Activated CD8-positive, alpha-beta T cell treated with anti-CD3 and anti-CD28 coated beads, Interleukin-2, amount 10 ng/mL, durations not matched to agents 7 days and 5 days (primary cell): ENCODE measurements at regions of chr9 and their contacts with region 1.

Region 1: DNA sequence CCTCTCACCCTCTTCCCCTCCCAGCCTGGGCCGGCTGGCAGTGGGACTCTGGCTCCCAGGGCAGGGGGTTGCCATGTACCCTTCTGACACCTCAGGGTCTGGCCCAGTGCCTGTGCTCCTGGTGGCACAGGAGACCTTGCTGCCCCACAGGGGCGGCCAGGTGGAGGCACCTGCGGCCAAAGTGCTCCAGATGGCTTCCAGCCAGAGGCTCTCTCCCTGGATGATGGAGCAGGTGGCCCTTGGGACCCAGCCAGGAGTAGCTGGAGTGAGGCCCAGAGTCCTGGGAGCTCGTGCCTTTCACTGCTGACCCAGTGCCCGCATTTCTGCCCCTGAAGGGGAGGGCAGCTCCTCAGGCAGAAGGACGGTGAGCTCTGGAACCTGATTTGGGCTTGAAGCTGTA is 87.3 kb downstream of the NTNG2 start:
- DNase-seq: no peak
- ATAC-seq: no peak
- H3K4me3 Mint-ChIP-seq: no peak overlapping the region
- H3K27ac Mint-ChIP-seq: no peak overlapping the region
- H3K4me1 Mint-ChIP-seq: peaks cover 2% of the 10 kb centered on the region
- H3K27me3 Mint-ChIP-seq: peaks cover 14% of the 10 kb centered on the region

Region 2: GRCh38 chr9:131762356-131762932 is 486.7 kb before region 1 on chr9:
- CTCF ChIA-PET with region 1: interaction called, 32 read pairs
- POLR2A ChIA-PET with region 1: interaction called, 3 read pairs
- DNase-seq: peak; percentile 75
- ATAC-seq: peak; percentile 92
- H3K4me3 Mint-ChIP-seq: no peak overlapping the region
- H3K27ac Mint-ChIP-seq: no peak overlapping the region
- H3K4me1 Mint-ChIP-seq: no peaks in the 10 kb centered on the region
- H3K27me3 Mint-ChIP-seq: peaks cover 22% of the 10 kb centered on the region

Region 3: DNA sequence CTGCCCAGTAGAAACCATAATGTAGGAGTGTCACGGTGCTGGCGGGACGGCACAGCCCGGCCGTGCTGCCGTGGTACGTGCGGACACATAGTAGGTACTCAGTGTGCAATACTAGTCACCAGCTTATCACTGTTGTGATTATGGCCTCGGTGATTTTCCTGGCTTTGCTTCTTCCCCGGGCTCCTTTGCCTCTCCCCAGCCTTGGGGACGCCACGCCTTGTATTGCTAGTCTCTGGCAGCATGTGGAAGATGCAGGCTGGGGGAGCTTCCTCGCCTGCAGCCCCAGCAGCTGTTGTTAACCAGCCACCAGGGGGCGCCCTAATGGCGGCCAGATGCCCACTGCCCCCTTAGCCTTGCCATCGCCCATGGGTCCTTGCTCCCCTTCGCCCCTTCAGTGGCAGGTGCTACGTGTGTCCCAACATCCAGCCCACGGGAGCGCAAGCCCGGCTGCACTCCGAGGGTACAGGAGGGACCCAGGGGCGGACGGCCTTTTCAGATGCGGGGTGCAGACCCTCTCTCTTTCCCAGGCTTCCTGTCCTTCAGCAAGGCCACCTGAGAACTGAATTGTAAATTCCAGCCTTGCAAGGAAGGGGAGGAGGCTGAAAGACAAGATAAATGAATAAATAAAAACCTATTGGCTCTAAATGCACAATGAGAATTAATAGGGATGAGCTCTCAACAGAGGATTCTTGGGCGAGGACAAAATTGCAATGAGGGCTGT is 79.3 kb before region 1 on chr9:
- CTCF ChIA-PET with region 1: interaction called, 12 read pairs
- POLR2A ChIA-PET with region 1: no interaction called
- DNase-seq: peak; percentile 73
- ATAC-seq: peak; percentile 72
- H3K4me3 Mint-ChIP-seq: no peak overlapping the region
- H3K27ac Mint-ChIP-seq: no peak overlapping the region
- H3K4me1 Mint-ChIP-seq: no peaks in the 10 kb centered on the region
- H3K27me3 Mint-ChIP-seq: peaks cover 26% of the 10 kb centered on the region

Region 4: DNA sequence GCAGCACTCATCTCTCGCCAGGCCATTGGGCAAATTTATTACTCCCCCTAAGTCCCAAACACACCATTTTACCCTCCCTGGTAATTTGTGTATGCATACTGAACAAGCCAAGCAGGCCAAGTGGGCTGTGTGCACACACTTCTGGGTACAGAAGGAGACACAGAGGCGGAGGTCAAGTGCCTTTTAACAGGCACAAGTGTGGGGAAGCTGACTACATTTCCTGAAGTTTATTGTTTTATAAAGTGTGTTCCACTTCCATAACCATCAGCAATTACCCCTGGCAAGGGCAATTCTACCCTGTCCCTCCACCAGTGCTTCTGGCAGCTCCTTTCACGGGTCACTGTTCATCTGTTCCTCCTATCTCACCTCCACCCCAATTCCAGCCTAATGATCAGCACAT is 11.7 kb after region 1 on chr9:
- CTCF ChIA-PET with region 1: interaction called, 20 read pairs
- POLR2A ChIA-PET with region 1: no interaction called
- DNase-seq: no peak
- ATAC-seq: no peak
- H3K4me3 Mint-ChIP-seq: no peak overlapping the region
- H3K27ac Mint-ChIP-seq: no peak overlapping the region
- H3K4me1 Mint-ChIP-seq: peaks cover 11% of the 10 kb centered on the region
- H3K27me3 Mint-ChIP-seq: no peaks in the 10 kb centered on the region